Activated CD4-positive, alpha-beta memory T cell treated with anti-CD3 and anti-CD28 coated beads, Interleukin-2, amount 10 ng/mL, durations not matched to agents 7 days and 5 days (primary cell): ENCODE measurements at regions of chr2 and their contacts with region 1.

Region 1: GRCh38 chr2:75241696-75242095 is 42.4 kb upstream of the TACR1 start:
- DNase-seq: no peak
- H3K4me3 Mint-ChIP-seq: no peak overlapping the region
- H3K27ac Mint-ChIP-seq: no peak overlapping the region
- H3K4me1 Mint-ChIP-seq: no peaks in the 10 kb centered on the region
- H3K27me3 Mint-ChIP-seq: peaks cover 4% of the 10 kb centered on the region

Region 2: GRCh38 chr2:74919827-74920226 is 321.9 kb before region 1 on chr2:
- CTCF ChIA-PET with region 1: interaction called, 12 read pairs
- POLR2A ChIA-PET with region 1: no interaction called
- DNase-seq: peak; percentile 71
- H3K4me3 Mint-ChIP-seq: no peak overlapping the region
- H3K27ac Mint-ChIP-seq: no peak overlapping the region
- H3K4me1 Mint-ChIP-seq: peaks cover 19% of the 10 kb centered on the region
- H3K27me3 Mint-ChIP-seq: peaks cover 29% of the 10 kb centered on the region